HepG2 (cell line): ENCODE measurements at regions of chr3 and their contacts with region 1.

Region 1: DNA sequence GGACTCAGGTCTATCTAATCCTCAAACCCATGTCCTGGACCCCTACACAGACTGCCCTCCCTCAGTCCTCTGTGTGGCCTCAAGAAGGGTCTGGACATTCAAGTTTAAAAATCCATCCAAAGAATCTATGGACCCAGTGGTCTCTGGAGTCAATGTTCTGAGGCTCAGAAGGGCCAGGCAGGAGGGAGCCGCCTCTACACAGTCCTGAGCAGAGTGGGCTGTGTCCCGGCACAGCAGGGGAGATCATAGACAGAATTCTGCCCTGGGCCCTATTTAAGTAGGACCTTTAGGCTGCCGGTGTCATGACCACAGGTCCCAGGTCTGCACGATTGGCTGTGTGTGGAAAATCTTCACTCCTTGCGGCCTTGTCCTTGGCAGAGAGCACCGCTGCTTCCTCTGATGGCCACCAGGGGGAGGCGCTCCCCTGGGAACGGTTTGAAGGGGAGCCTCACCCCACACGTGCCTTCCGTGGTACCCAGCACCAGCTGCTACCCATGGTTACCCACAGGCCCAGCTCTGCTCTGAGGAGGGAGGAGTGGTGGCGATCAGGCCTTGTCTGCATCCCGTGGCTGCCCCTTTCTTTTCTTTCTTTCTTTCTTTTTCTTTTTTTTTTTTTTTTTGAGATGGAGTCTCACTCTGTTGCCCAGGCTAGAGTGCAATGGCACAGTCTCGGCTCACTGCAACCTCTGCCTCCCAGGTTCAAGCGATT is 37.9 kb downstream of the CHRD start:
- DNase-seq: peak; percentile 56
- ATAC-seq: peak; percentile 71
- H3K4me3 ChIP-seq: peak overlapping the region in 1 of 3 experiments; percentile 52; a peak in 2 of 6 replicates
- H3K27ac ChIP-seq: peak overlapping the region; percentile 74
- H3K4me1 ChIP-seq: peaks cover 41% of the 10 kb centered on the region
- H3K27me3 ChIP-seq: no peaks in the 10 kb centered on the region
- CTCF ChIP-seq: peak; percentile 95
- EP300 ChIP-seq: no peak
- POLR2A ChIP-seq: no peak
- RAD21 ChIP-seq: peak; percentile 67

Region 2: GRCh38 chr3:183924956-183925355 is 492.8 kb before region 1 on chr3:
- CTCF ChIA-PET with region 1: no interaction called
- POLR2A ChIA-PET with region 1: no interaction called
- in situ Hi-C with region 1: no loop called
- intact Hi-C with region 1: no loop called
- DNase-seq: no peak
- ATAC-seq: no peak
- H3K4me3 ChIP-seq: no peak overlapping the region
- H3K27ac ChIP-seq: no peak overlapping the region
- H3K4me1 ChIP-seq: peaks cover 5% of the 10 kb centered on the region
- H3K27me3 ChIP-seq: no peaks in the 10 kb centered on the region
- CTCF ChIP-seq: no peak
- EP300 ChIP-seq: no peak
- POLR2A ChIP-seq: no peak
- RAD21 ChIP-seq: no peak

Region 3: DNA sequence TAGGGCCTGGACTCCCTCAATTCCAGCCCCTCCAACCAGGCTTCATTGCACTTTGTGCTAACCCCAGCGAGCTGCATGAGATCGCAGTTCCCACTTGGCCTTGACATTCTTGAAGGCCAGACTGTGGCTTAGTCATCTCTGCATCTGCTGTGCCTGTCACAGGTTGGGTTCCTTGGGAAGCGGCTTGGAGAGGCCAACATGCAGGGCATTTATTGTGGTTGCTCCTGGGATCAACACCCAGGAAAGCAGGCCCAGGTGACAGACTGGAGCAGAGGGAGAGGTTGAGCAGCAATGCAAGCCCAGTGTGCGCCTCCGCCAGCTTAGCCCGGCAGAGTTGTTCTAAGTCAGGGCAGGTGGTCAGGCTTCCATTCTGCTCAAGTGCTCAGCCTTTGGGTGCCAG is 221.2 kb before region 1 on chr3:
- CTCF ChIA-PET with region 1: no interaction called
- POLR2A ChIA-PET with region 1: no interaction called
- in situ Hi-C with region 1: no loop called
- intact Hi-C with region 1: no loop called
- DNase-seq: peak; percentile 18
- ATAC-seq: peak; percentile 61
- H3K4me3 ChIP-seq: no peak overlapping the region
- H3K27ac ChIP-seq: no peak overlapping the region
- H3K4me1 ChIP-seq: peaks cover 12% of the 10 kb centered on the region
- H3K27me3 ChIP-seq: no peaks in the 10 kb centered on the region
- CTCF ChIP-seq: no peak
- EP300 ChIP-seq: no peak
- POLR2A ChIP-seq: no peak
- RAD21 ChIP-seq: no peak

Region 4: GRCh38 chr3:184371570-184372018 is 46.2 kb before region 1 on chr3:
- CTCF ChIA-PET with region 1: interaction called, 3 read pairs
- POLR2A ChIA-PET with region 1: interaction called, 8 read pairs
- in situ Hi-C with region 1: no loop called
- intact Hi-C with region 1: loop called (anchors 2 kb)
- DNase-seq: peak; percentile 84
- ATAC-seq: peak; percentile 92
- H3K4me3 ChIP-seq: no peak overlapping the region
- H3K27ac ChIP-seq: peak overlapping the region; percentile 18
- H3K4me1 ChIP-seq: peaks cover 30% of the 10 kb centered on the region
- H3K27me3 ChIP-seq: no peaks in the 10 kb centered on the region
- CTCF ChIP-seq: peak; percentile 98
- EP300 ChIP-seq: peak in 1 of 2 experiments; percentile 23; a peak in 1 of 4 replicates
- POLR2A ChIP-seq: peak in 1 of 2 experiments; percentile 49; a peak in 1 of 4 replicates
- RAD21 ChIP-seq: peak; percentile 98

Region 5: DNA sequence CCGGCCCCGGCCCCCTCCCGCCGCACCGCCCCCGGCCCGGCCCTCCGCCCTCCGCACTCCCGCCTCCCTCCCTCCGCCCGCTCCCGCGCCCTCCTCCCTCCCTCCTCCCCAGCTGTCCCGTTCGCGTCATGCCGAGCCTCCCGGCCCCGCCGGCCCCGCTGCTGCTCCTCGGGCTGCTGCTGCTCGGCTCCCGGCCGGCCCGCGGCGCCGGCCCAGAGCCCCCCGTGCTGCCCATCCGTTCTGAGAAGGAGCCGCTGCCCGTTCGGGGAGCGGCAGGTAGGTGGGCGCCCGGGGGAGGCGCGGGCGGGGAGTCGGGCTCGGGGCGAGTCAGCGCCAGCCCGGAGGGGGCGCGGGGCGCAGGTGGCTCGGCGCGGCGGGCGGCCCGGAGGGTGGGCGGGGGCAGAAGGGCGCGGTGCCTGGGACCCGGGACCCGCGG is 37.6 kb before region 1 on chr3:
- CTCF ChIA-PET with region 1: no interaction called
- POLR2A ChIA-PET with region 1: interaction called, 8 read pairs
- in situ Hi-C with region 1: no loop called
- intact Hi-C with region 1: loop called (anchors 2 kb)
- DNase-seq: peak; percentile 21
- ATAC-seq: no peak
- H3K4me3 ChIP-seq: peak overlapping the region; percentile 59 to 79 (median 71); a peak in 4 of 6 replicates
- H3K27ac ChIP-seq: no peak overlapping the region
- H3K4me1 ChIP-seq: peaks cover 27% of the 10 kb centered on the region
- H3K27me3 ChIP-seq: no peaks in the 10 kb centered on the region; a peak in 1 of 5 replicates
- CTCF ChIP-seq: no peak
- EP300 ChIP-seq: no peak
- POLR2A ChIP-seq: peak in 1 of 2 experiments; percentile 37; a peak in 1 of 4 replicates
- RAD21 ChIP-seq: no peak

Region 6: DNA sequence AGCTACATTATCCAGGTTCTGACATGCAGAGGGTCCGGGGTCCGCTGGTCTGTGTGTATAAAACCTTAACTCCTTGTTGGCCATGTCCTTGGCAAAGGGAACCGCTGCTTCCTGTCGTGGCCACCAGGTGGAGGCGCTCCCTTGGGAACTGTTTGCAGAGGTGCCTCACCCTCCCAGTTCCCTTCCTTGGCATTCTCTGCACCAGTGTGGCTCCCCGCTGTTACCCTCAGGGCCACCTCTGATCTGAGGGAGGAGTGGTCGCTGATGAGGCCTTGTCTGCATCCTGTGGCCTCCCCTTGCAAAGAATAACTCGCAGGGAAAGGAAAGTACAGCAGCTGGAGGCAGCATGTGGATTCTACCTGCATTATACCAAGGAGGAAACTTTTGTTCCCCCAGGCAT is 51.6 kb after region 1 on chr3:
- CTCF ChIA-PET with region 1: no interaction called
- POLR2A ChIA-PET with region 1: no interaction called
- in situ Hi-C with region 1: no loop called
- intact Hi-C with region 1: loop called (anchors 2 kb)
- DNase-seq: peak; percentile 25
- ATAC-seq: peak; percentile 68
- H3K4me3 ChIP-seq: no peak overlapping the region
- H3K27ac ChIP-seq: no peak overlapping the region
- H3K4me1 ChIP-seq: peaks cover 10% of the 10 kb centered on the region
- H3K27me3 ChIP-seq: peaks cover 1 to 34% of the 10 kb centered on the region in 2 experiments; a peak in 3 of 5 replicates
- CTCF ChIP-seq: peak; percentile 76
- EP300 ChIP-seq: no peak
- POLR2A ChIP-seq: no peak
- RAD21 ChIP-seq: no peak

Region 7: GRCh38 chr3:184513276-184514170 is 95.8 kb after region 1 on chr3:
- CTCF ChIA-PET with region 1: interaction called, 3 read pairs
- POLR2A ChIA-PET with region 1: no interaction called
- in situ Hi-C with region 1: no loop called
- intact Hi-C with region 1: loop called (anchors 2 kb)
- DNase-seq: peak; percentile 58
- ATAC-seq: peak; percentile 100
- H3K4me3 ChIP-seq: peak overlapping the region; percentile 26 to 70 (median 45); a peak in 4 of 6 replicates
- H3K27ac ChIP-seq: no peak overlapping the region
- H3K4me1 ChIP-seq: no peaks in the 10 kb centered on the region; the same call in 1 of the 2 replicates
- H3K27me3 ChIP-seq: peaks cover 8 to 58% of the 10 kb centered on the region in 2 experiments; a peak in 4 of 5 replicates
- CTCF ChIP-seq: peak; percentile 92
- EP300 ChIP-seq: no peak
- POLR2A ChIP-seq: no peak
- RAD21 ChIP-seq: peak; percentile 81

Region 8: GRCh38 chr3:184986366-184986889 is 568.7 kb after region 1 on chr3:
- CTCF ChIA-PET with region 1: no interaction called
- POLR2A ChIA-PET with region 1: no interaction called
- in situ Hi-C with region 1: no loop called
- intact Hi-C with region 1: no loop called
- DNase-seq: no peak
- ATAC-seq: no peak
- H3K4me3 ChIP-seq: no peak overlapping the region
- H3K27ac ChIP-seq: no peak overlapping the region
- H3K4me1 ChIP-seq: peaks cover under 1% of the 10 kb centered on the region; the same call in 1 of the 2 replicates
- H3K27me3 ChIP-seq: no peaks in the 10 kb centered on the region; a peak in 1 of 5 replicates
- CTCF ChIP-seq: no peak
- EP300 ChIP-seq: no peak
- POLR2A ChIP-seq: no peak
- RAD21 ChIP-seq: no peak